ENCODE measurements at regions of chr10 and their contacts with region 1.

Region 1: DNA sequence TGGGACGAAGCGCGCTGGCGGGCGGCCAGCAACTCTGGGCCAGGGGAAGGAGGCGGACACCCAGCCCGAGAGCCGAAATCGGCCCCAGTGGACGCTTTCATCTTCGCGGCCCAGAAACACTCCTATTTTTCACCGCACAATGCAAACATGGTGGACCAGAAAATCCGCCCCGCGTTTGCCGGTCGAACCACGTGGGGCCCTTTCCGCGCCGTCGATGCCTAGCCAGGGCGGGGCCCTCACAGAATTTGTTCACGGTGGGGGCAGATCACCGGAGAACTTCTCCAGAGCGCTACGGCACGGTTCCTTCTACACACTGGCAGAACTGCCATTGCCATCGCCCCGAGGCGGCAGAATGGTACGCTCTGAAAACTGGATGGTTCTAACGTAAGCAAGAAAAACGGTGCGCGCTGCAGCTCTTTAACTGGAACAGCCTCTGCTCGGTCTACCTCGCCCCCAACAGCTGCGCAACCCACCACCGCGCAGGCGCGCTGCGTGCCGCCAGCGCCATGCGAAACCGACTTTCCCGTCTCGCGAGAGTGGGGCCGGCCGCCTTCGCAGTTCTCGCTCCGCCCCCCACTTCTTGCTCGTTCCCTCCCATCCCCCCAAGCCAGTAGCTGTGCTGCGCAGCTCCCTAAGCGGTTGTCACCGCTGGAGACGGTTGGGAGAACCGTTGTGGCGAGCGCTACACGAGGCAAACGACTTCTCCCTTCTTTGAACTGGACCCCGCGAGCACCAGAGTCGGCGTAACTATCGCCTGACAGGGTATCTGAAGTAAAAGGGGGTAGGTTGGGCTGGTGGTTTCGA is at the start of gene HNRNPH3:
- DNase-seq: peak; percentile 97 to 100
- ATAC-seq: peak; percentile 83 to 94 (median 85)
- H3K4me3 ChIP-seq: peak within 1 kb of the TSS; percentile 97
- H3K4me3 Mint-ChIP-seq: peak within 1 kb of the TSS; percentile 98
- H3K27ac ChIP-seq: peak within 1 kb of the TSS; percentile 95
- H3K27ac Mint-ChIP-seq: peak within 1 kb of the TSS; percentile 97 to 99
- H3K4me1 ChIP-seq: peaks cover 11% of the 10 kb centered on the region
- H3K4me1 Mint-ChIP-seq: peaks cover 54 to 55% of the 10 kb centered on the region in 2 donors
- H3K27me3 ChIP-seq: no peaks in the 10 kb centered on the region
- H3K27me3 Mint-ChIP-seq: no peaks in the 10 kb centered on the region
- CTCF ChIP-seq: no peak
- total RNA-seq, gene HNRNPH3: 132 to 162 (median 142) TPM

Region 2: GRCh38 chr10:67849331-67850011 is 482.2 kb before region 1 on chr10:
- intact Hi-C with region 1: loop called (anchors 2 kb)
- DNase-seq: peak; percentile 87 to 95
- ATAC-seq: peak; percentile 98 to 100 (median 99)
- H3K4me3 ChIP-seq: peak overlapping the region; percentile 85
- H3K4me3 Mint-ChIP-seq: peak overlapping the region; percentile 94
- H3K27ac ChIP-seq: peak overlapping the region; percentile 91
- H3K27ac Mint-ChIP-seq: peak overlapping the region; percentile 89 to 91
- H3K4me1 ChIP-seq: peaks cover 9% of the 10 kb centered on the region
- H3K4me1 Mint-ChIP-seq: peaks cover 10 to 12% of the 10 kb centered on the region in 2 donors
- H3K27me3 ChIP-seq: no peaks in the 10 kb centered on the region
- H3K27me3 Mint-ChIP-seq: no peaks in the 10 kb centered on the region
- CTCF ChIP-seq: no peak

Region 3: GRCh38 chr10:68074775-68075549 is 256.7 kb before region 1 on chr10 and contains the start of gene HERC4:
- intact Hi-C with region 1: loop called (anchors 2 kb)
- DNase-seq: peak; percentile 83 to 96
- ATAC-seq: peak; percentile 87 to 97 (median 90)
- H3K4me3 ChIP-seq: peak within 1 kb of the TSS; percentile 78
- H3K4me3 Mint-ChIP-seq: peak within 1 kb of the TSS; percentile 94
- H3K27ac ChIP-seq: peak within 1 kb of the TSS; percentile 95
- H3K27ac Mint-ChIP-seq: peak within 1 kb of the TSS; percentile 92 to 94
- H3K4me1 ChIP-seq: peaks cover 5% of the 10 kb centered on the region
- H3K4me1 Mint-ChIP-seq: peaks cover 31 to 32% of the 10 kb centered on the region in 2 donors
- H3K27me3 ChIP-seq: no peaks in the 10 kb centered on the region
- H3K27me3 Mint-ChIP-seq: no peaks in the 10 kb centered on the region
- CTCF ChIP-seq: no peak
- total RNA-seq, gene HERC4: 78.4 to 104 (median 83.9) TPM

Region 4: DNA sequence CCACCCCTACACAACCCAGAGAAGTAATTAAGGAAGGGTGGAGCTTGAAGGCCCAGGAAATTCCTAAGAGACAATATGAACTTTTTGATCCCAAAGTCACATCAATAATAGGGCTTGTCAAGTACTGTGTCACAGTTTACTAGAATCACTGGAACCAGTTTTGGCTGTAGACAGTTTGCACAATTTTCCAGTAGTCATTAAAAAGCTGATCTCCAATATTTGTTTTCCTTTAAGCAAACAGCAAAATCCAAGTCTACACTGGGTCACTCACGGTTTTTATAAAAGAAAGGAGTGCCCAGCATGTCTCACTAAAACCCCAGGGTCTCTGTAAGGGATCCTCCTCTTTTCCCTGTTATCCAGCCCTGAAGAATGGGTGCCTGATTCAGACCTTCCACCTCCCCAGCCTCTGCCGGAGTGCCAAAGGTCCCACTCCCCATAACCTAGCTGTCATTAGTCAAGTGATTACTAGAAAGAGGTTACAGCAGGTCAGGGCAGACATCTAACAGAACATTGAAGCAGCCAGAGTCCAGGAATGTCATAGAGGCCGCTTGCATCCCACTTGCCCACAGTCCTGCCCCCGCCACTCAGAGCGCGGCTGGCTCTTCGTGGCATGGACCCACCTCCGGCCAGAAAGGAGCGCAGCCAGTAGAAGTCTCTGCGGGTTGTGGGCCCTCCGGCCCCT is 195.1 kb after region 1 on chr10:
- intact Hi-C with region 1: loop called (anchors 5 kb)
- DNase-seq: no peak
- ATAC-seq: no peak
- H3K4me3 ChIP-seq: peak overlapping the region; percentile 65
- H3K4me3 Mint-ChIP-seq: peak overlapping the region; percentile 91
- H3K27ac ChIP-seq: peak overlapping the region; percentile 84
- H3K27ac Mint-ChIP-seq: peak overlapping the region; percentile 90 to 94
- H3K4me1 ChIP-seq: peaks cover 15% of the 10 kb centered on the region
- H3K4me1 Mint-ChIP-seq: peaks cover 8% of the 10 kb centered on the region in 2 donors
- H3K27me3 ChIP-seq: no peaks in the 10 kb centered on the region
- H3K27me3 Mint-ChIP-seq: no peaks in the 10 kb centered on the region
- CTCF ChIP-seq: no peak